Naive thymus-derived CD4-positive, alpha-beta T cell (primary cell): ENCODE measurements at regions of chr10 and their contacts with region 1.

Region 1: DNA sequence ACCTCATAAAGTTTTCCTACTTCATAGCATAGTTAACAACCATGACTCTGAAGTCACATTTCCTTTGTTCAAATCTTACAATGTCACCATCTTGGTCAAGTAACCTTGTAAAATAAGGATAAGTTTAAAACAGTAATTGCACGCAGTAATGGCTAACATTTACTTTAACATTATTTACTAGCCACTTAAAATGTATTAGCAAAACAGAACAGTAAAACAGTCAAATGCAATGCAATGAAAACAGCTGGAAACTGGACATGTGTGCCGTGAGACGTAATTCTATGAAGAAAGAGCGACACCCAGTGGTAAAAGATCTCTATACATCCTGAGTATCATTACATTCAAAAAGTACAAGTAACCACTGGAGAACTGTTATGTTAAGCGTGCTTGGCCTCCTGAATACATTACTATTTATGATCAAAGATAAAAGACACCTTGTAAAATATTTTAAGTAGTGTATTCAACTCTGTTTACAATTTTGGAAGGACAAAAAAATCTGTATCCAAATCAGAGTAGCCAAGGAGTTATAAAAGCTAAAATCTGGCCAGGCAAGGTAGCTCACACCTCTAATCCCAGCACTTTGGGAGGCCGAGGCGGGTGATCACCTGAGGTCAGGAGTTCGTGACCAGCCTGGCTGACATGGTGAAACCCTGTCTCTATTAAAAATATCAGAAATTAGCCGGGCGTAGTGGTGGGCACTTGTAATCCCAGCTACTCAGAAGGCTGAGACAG is 27.2 kb downstream of the ATE1 start:
- DNase-seq: peak in 6 of 9 donors; percentile 3 to 36 (median 25)
- ATAC-seq: peak; percentile 67
- H3K4me3 ChIP-seq: no peak overlapping the region
- H3K4me3 Mint-ChIP-seq: no peak overlapping the region
- H3K27ac ChIP-seq: no peak overlapping the region
- H3K27ac Mint-ChIP-seq: peak overlapping the region in 1 of 9 donors; percentile 48
- H3K4me1 ChIP-seq: no peaks in the 10 kb centered on the region
- H3K4me1 Mint-ChIP-seq: peaks cover 0 to 5% (median 4%) of the 10 kb centered on the region in 7 donors
- H3K27me3 ChIP-seq: no peaks in the 10 kb centered on the region
- H3K27me3 Mint-ChIP-seq: no peaks in the 10 kb centered on the region

Region 2: DNA sequence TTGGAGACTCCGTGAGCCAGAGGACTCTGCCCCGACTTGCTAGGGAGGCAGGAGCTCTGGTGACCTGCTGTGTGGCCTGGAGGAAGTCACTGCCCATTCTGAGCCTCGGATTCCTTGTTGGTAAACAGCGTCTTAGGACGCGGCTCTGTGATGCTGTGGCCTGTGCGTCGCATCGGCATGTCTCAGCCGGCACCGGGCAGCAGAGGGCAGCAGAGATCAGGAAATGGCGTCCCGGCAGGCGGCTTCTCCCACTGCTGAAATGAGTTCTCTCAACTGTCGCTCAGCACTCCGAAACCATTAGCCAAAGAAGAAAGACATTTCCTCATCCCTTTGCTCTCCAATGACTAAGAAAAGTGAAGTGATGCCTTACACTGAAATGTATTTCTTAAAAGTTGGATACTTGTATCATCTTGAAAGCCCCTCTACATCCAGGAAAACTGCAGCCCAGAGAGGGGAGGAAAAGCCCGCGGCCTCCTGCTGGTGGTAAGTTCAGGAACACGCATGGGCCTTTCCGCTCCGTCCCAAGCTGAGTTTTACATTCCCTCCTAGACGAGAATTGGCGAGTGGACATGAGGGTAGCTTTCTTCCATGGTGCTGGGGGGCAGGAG is 957.7 kb before region 1 on chr10:
- CTCF ChIA-PET with region 1: no interaction called
- POLR2A ChIA-PET with region 1: no interaction called
- intact Hi-C with region 1: loop called (anchors 1 to 2 kb)
- DNase-seq: peak; percentile 29 to 81 (median 58)
- ATAC-seq: peak; percentile 90
- H3K4me3 ChIP-seq: no peak overlapping the region
- H3K4me3 Mint-ChIP-seq: peak overlapping the region in 5 of 10 donors; percentile 25 to 65 (median 32)
- H3K27ac ChIP-seq: no peak overlapping the region
- H3K27ac Mint-ChIP-seq: no peak overlapping the region
- H3K4me1 ChIP-seq: no peaks in the 10 kb centered on the region
- H3K4me1 Mint-ChIP-seq: peaks cover 0 to 11% (median 5%) of the 10 kb centered on the region in 7 donors
- H3K27me3 ChIP-seq: no peaks in the 10 kb centered on the region
- H3K27me3 Mint-ChIP-seq: peaks cover 4 to 44% (median 20%) of the 10 kb centered on the region in 5 donors

Region 3: GRCh38 chr10:120948889-120949608 is 951.6 kb before region 1 on chr10:
- CTCF ChIA-PET with region 1: no interaction called
- POLR2A ChIA-PET with region 1: no interaction called
- intact Hi-C with region 1: loop called (anchors 1 kb)
- DNase-seq: peak in 7 of 9 donors; percentile 25 to 78 (median 37)
- ATAC-seq: peak; percentile 91
- H3K4me3 ChIP-seq: peak overlapping the region; percentile 34
- H3K4me3 Mint-ChIP-seq: peak overlapping the region in 9 of 10 donors; percentile 27 to 75 (median 60)
- H3K27ac ChIP-seq: no peak overlapping the region
- H3K27ac Mint-ChIP-seq: no peak overlapping the region
- H3K4me1 ChIP-seq: peaks cover 0 to 6% of the 10 kb centered on the region in 2 donors
- H3K4me1 Mint-ChIP-seq: peaks cover 0 to 9% (median 5%) of the 10 kb centered on the region in 7 donors
- H3K27me3 ChIP-seq: peaks cover 0 to 3% of the 10 kb centered on the region in 2 donors
- H3K27me3 Mint-ChIP-seq: peaks cover 35 to 56% (median 47%) of the 10 kb centered on the region in 5 donors

Region 4: GRCh38 chr10:121600611-121601010 is 300.0 kb before region 1 on chr10:
- CTCF ChIA-PET with region 1: no interaction called
- POLR2A ChIA-PET with region 1: no interaction called
- intact Hi-C with region 1: no loop called
- DNase-seq: no peak
- ATAC-seq: no peak
- H3K4me3 ChIP-seq: no peak overlapping the region
- H3K4me3 Mint-ChIP-seq: no peak overlapping the region
- H3K27ac ChIP-seq: no peak overlapping the region
- H3K27ac Mint-ChIP-seq: no peak overlapping the region
- H3K4me1 ChIP-seq: no peaks in the 10 kb centered on the region
- H3K4me1 Mint-ChIP-seq: peaks cover 0 to 11% (median 8%) of the 10 kb centered on the region in 7 donors
- H3K27me3 ChIP-seq: peaks cover 0 to 3% of the 10 kb centered on the region in 2 donors
- H3K27me3 Mint-ChIP-seq: peaks cover 45 to 64% (median 52%) of the 10 kb centered on the region in 5 donors

Region 5: DNA sequence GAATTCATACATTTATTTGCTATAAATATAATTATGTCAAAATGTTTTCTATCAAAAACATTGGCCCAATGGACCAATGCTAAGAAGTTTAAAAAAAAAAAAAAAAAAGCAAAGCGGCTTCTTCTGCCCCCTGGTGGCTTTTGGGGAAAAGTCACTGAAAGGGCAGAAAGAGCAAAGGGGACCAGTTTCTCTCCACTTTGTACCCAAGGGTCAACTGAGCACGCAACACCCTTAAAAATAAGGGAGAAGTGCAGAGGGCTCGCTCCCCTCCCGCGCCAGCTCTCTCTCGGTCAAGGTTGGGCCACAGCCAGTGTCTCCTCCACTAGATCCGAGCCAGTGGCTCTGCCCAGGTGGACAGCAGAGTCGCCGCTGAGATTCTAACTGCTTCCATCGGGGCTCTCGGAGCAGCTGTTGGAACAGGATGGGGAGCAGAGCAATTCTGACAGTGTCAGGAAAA is 166.0 kb before region 1 on chr10:
- CTCF ChIA-PET with region 1: no interaction called
- POLR2A ChIA-PET with region 1: interaction called, 3 read pairs
- intact Hi-C with region 1: loop called in 1 of 2 experiments (anchors 5 kb)
- DNase-seq: no peak
- ATAC-seq: no peak
- H3K4me3 ChIP-seq: no peak overlapping the region
- H3K4me3 Mint-ChIP-seq: no peak overlapping the region
- H3K27ac ChIP-seq: no peak overlapping the region
- H3K27ac Mint-ChIP-seq: no peak overlapping the region
- H3K4me1 ChIP-seq: peaks cover 0 to 5% of the 10 kb centered on the region in 2 donors
- H3K4me1 Mint-ChIP-seq: peaks cover 0 to 18% (median 5%) of the 10 kb centered on the region in 7 donors
- H3K27me3 ChIP-seq: peaks cover 0 to 3% of the 10 kb centered on the region in 2 donors
- H3K27me3 Mint-ChIP-seq: peaks cover 11 to 36% (median 31%) of the 10 kb centered on the region in 5 donors

Region 6: GRCh38 chr10:121823993-121824463 is 76.6 kb before region 1 on chr10:
- CTCF ChIA-PET with region 1: interaction called, 3 read pairs
- POLR2A ChIA-PET with region 1: no interaction called
- intact Hi-C with region 1: loop called (anchors 1 kb)
- DNase-seq: peak in 3 of 9 donors; percentile 1 to 17 (median 3)
- ATAC-seq: no peak
- H3K4me3 ChIP-seq: no peak overlapping the region
- H3K4me3 Mint-ChIP-seq: no peak overlapping the region
- H3K27ac ChIP-seq: no peak overlapping the region
- H3K27ac Mint-ChIP-seq: no peak overlapping the region
- H3K4me1 ChIP-seq: no peaks in the 10 kb centered on the region
- H3K4me1 Mint-ChIP-seq: peaks cover 0 to 6% (median 0%) of the 10 kb centered on the region in 7 donors
- H3K27me3 ChIP-seq: no peaks in the 10 kb centered on the region
- H3K27me3 Mint-ChIP-seq: no peaks in the 10 kb centered on the region

Region 7: GRCh38 chr10:122114156-122114747 is 213.6 kb after region 1 on chr10:
- CTCF ChIA-PET with region 1: no interaction called
- POLR2A ChIA-PET with region 1: no interaction called
- intact Hi-C with region 1: no loop called
- DNase-seq: no peak
- ATAC-seq: no peak
- H3K4me3 ChIP-seq: no peak overlapping the region
- H3K4me3 Mint-ChIP-seq: peak overlapping the region in 5 of 10 donors; percentile 5 to 72 (median 52)
- H3K27ac ChIP-seq: no peak overlapping the region
- H3K27ac Mint-ChIP-seq: no peak overlapping the region
- H3K4me1 ChIP-seq: no peaks in the 10 kb centered on the region
- H3K4me1 Mint-ChIP-seq: peaks cover 0 to 11% (median 5%) of the 10 kb centered on the region in 7 donors
- H3K27me3 ChIP-seq: no peaks in the 10 kb centered on the region
- H3K27me3 Mint-ChIP-seq: peaks cover 45 to 57% (median 51%) of the 10 kb centered on the region in 5 donors

Region 8: DNA sequence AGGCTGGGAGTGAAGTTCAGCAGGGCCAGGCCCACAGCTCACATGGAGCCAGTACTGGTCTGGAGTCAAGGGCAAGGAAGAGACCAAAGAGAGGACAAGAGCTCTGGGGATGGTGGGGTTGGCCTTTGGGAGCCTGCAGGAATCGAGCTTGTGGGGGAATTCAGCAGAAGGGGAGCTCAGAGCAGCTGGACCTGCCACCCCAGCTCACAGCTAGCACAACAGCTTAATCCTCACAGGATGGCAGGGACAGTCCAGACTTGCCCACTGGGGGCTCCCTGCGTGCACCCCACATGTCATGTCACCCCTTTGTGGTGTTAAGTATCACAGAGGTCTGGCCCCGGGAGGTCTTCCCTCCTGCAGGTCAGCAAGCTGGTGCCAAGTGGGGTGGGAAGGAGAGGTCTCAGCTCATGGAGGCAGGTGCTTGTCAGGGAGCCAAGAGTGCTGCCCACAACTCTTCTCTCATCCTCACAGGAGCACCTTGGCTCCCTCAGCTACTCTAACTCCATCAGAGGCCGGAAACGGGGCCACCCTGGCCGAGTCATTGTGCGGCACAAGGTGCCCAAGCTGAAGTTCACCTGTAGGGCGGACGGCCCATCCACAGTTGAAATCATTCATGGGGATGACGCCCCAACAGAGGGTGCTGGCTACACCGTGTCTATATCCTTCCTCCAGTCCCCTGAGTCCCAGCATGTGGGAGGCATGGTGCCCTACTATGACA is 922.5 kb after region 1 on chr10:
- CTCF ChIA-PET with region 1: no interaction called
- POLR2A ChIA-PET with region 1: no interaction called
- intact Hi-C with region 1: no loop called
- DNase-seq: no peak
- ATAC-seq: no peak
- H3K4me3 ChIP-seq: no peak overlapping the region
- H3K4me3 Mint-ChIP-seq: no peak overlapping the region
- H3K27ac ChIP-seq: no peak overlapping the region
- H3K27ac Mint-ChIP-seq: no peak overlapping the region
- H3K4me1 ChIP-seq: no peaks in the 10 kb centered on the region
- H3K4me1 Mint-ChIP-seq: no peaks in the 10 kb centered on the region
- H3K27me3 ChIP-seq: no peaks in the 10 kb centered on the region
- H3K27me3 Mint-ChIP-seq: peaks cover 25 to 68% (median 47%) of the 10 kb centered on the region in 5 donors